ENCODE measurements at regions of chr2 and their contacts with region 1.

Region 1: DNA sequence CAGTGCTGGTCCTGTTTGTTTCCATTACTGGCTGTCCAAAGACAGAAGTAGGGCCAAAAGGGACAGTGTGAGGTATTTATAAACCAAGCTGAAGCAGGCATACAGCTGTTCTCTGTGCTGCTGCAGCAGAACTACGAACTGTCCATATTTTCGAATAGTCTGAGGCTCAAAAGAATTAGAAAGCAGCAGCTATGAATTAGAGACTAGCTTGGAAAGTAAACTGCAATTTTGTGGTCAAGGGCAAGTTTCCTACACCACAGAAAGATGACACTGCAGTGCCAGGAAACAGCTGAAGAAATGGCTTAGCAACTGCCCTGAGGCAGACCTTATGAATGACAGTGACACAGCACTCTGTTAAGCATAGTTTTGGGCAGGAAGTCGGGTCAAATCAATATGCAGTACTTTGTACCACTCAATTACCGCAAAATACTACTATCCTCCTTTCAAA is 125.3 kb downstream of the TMEM131 start:
- DNase-seq: peak; percentile 89
- H3K4me3 Mint-ChIP-seq: peak overlapping the region; percentile 17
- H3K27ac Mint-ChIP-seq: peak overlapping the region; percentile 57
- H3K4me1 Mint-ChIP-seq: peaks cover 25% of the 10 kb centered on the region
- H3K27me3 Mint-ChIP-seq: no peaks in the 10 kb centered on the region

Region 2: DNA sequence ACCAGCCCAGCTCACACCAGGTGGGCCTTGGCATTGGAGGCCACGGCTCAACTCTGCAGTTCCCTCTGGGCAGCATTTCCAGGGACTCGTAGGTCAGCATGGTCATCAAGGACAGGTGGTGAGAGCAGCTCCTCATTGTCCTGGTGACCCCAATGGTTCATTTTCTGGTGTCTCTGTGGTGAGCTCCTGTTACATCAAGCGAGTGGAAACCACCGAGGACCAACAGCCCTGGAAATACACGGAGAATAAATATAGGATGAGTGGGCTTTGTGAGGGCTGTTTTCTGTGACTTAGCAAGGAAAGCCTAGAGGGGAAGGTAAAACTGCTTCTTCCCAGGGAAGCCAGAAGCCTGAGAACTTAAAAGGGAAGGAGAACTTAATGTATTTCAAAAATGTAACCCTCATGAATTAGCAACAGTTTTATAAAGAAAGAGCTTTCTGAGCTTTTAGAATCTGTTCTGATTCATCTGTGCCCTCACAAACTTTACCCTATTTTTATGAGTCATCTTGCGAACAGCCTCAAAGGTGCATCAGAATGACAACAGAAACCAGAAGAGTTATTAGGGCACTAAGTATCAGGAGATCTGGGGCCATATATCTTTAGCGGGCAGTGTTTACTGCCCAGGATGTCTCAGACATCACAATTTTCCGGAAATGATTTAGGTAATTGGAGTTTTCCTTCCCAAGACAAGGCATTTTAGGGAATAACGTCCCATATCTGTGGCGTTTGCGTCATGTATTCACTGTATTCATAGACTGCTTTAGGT is 182.2 kb before region 1 on chr2:
- intact Hi-C with region 1: no loop called
- DNase-seq: no peak
- H3K4me3 Mint-ChIP-seq: peak overlapping the region; percentile 16
- H3K27ac Mint-ChIP-seq: peak overlapping the region; percentile 68
- H3K4me1 Mint-ChIP-seq: peaks cover 16% of the 10 kb centered on the region
- H3K27me3 Mint-ChIP-seq: no peaks in the 10 kb centered on the region

Region 3: DNA sequence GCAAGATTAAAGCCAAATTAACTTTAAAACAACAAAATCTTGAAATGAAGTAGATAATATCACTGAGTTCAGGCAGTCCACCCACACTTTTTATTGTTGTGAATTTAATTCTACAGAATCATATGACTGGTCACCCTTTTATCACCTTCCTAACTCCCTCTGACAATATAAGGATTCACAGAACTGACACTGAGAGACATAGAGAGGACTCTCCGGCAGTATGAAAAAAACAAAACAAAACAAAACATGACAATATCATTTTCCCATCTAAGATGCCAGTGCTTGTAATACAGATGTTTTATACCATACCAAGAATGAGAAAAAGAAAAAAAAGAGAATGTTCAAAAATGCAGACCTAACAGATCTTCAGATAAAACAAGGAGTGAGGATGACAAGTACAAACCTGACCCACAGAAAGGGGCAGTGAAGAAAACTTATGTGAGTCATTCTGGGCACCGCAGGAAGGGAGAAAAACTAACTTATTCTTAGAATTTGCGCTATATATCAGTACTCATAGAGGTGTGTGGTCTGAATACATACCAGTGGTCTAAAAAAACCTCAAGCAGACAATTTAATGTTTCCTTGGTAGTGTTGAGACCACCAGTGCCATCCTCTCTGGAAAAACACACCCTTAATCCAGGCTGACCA is 20.4 kb before region 1 on chr2:
- intact Hi-C with region 1: loop called (anchors 2 kb)
- DNase-seq: no peak
- H3K4me3 Mint-ChIP-seq: peak overlapping the region; percentile 41
- H3K27ac Mint-ChIP-seq: peak overlapping the region; percentile 61
- H3K4me1 Mint-ChIP-seq: peaks cover 30% of the 10 kb centered on the region
- H3K27me3 Mint-ChIP-seq: no peaks in the 10 kb centered on the region

Region 4: DNA sequence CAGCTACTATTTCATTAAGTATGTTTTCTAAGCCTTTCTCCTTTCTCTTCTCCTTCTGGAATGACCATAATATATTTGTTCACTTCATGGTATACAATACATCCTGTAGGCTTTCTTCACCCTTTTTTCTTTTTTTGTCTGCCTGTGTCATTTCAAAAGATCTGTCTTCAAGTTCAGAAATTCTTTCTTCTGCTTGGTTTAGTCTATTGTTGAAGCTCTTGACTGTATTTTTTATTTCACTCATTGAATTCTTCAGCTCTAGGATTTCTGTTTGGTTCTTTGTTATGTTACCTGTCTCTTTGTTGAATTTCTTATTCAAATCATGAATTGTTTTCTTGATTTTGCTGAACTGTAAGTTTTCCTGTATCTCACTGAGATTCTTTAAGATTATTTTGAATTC is 15.4 kb after region 1 on chr2:
- intact Hi-C with region 1: no loop called
- DNase-seq: no peak
- H3K4me3 Mint-ChIP-seq: no peak overlapping the region
- H3K27ac Mint-ChIP-seq: no peak overlapping the region
- H3K4me1 Mint-ChIP-seq: no peaks in the 10 kb centered on the region
- H3K27me3 Mint-ChIP-seq: no peaks in the 10 kb centered on the region

Region 5: DNA sequence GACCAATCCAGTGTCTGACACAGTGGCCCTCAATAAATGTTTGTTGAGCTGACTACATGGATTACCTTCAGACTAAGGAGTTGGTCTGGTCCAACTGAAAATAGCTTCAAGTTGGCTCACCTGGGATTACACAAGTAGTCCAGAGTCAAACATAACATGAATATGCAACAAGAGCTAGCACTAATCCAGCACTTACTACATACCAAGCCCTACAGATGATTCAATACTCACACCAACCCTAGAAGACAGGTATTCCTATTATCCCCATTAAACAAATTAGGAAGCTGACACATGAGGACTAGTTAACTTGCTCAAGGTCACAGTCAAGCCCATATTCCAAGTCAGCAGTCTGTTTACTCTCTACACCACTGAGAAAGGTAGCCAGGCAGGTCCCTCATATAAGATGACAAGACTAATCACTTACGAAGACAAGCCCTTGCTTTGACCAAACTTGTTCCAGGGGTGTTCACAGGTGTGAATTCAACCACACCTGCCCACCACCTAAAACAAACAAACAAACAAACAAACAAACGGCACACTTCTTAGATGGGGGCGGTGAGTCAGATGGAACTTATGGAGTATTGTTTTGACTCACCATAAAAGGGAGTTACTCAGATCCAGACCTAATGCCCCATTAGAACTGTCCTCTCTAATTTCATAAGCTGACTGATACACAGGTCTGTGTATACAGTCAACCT is 96.2 kb after region 1 on chr2:
- intact Hi-C with region 1: loop called (anchors 10 kb)
- DNase-seq: no peak
- H3K4me3 Mint-ChIP-seq: no peak overlapping the region
- H3K27ac Mint-ChIP-seq: no peak overlapping the region
- H3K4me1 Mint-ChIP-seq: peaks cover 38% of the 10 kb centered on the region
- H3K27me3 Mint-ChIP-seq: no peaks in the 10 kb centered on the region